Tibial artery (tissue), 4 donors: ENCODE measurements at regions of chr1 and their contacts with region 1.

Region 1: DNA sequence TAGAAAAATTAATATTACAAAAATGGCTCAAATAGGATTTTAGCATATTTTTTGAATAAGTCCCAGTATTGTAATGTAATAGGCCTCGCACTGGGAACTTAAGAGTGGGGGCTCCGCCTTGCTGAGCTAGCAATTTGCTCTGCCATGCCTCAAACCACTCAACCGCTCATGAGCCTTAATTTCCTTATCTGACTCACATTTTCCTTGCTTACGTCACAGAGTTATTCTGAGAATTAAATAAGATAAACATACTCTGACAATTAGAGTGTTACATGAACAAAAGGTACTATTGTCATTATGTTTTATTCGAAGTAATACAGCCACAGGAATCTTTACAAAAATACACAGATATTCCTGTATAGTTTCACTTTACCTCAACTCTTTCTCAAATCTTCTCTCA is 108.1 kb downstream of the SLC44A5 start:
- DNase-seq: no peak
- H3K4me3 ChIP-seq: no peak overlapping the region
- H3K27ac ChIP-seq: no peak overlapping the region
- H3K4me1 ChIP-seq: no peaks in the 10 kb centered on the region
- H3K27me3 ChIP-seq: no peaks in the 10 kb centered on the region
- CTCF ChIP-seq: no peak

Region 2: DNA sequence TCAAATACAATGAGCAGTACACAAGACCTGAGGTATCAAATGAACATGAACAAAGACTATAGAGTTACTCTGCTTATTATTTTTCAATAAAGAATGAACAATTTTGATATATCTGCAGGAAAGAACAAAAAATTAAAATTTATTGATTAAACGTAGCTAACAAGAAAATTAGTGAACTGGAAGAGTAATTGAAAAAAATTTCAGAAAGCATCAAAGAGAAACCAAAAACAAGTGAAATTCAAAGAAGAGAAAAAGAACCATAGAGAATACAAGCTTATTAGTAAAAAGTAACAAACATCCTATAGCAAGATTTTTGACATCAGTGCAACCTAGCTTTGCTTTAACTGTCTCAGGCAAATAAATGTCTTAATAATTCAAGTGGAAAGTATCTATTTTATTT is 1411.4 kb before region 1 on chr1:
- intact Hi-C with region 1: loop called (anchors 5 kb)
- DNase-seq: no peak
- H3K4me3 ChIP-seq: no peak overlapping the region
- H3K27ac ChIP-seq: no peak overlapping the region
- H3K4me1 ChIP-seq: no peaks in the 10 kb centered on the region
- H3K27me3 ChIP-seq: no peaks in the 10 kb centered on the region
- CTCF ChIP-seq: no peak

Region 3: GRCh38 chr1:75539230-75540116 is 36.7 kb after region 1 on chr1:
- intact Hi-C with region 1: no loop called
- DNase-seq: no peak
- H3K4me3 ChIP-seq: no peak overlapping the region
- H3K27ac ChIP-seq: no peak overlapping the region
- H3K4me1 ChIP-seq: no peaks in the 10 kb centered on the region
- H3K27me3 ChIP-seq: no peaks in the 10 kb centered on the region
- CTCF ChIP-seq: no peak